Activated naive CD4-positive, alpha-beta T cell treated with anti-CD3 and anti-CD28 coated beads for 36 hours (primary cell): ENCODE measurements at regions of chr1 and their contacts with region 1.

Region 1: DNA sequence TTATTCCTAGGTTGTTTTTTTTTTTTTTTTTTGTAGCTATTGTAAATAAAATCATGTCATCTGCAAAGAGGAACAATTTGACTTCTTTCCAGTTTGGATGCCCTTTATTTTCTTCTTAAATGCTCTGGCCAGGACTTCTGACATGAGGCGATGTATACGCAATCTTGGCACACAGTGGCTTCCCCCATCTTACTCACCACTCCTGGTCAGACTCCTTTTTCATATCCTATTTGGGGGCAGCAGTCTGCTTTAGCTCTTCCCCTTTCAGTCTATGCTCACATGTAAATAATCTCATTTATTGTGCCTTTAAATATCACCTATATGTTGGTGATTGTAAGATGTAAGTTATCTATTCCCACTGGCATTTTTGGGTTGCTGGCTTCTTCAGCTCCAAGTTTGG is 56.1 kb downstream of the SLAMF6 start:
- DNase-seq: no peak
- H3K4me3 Mint-ChIP-seq: no peak overlapping the region
- H3K27ac Mint-ChIP-seq: peak overlapping the region; percentile 86
- H3K4me1 Mint-ChIP-seq: peaks cover 64% of the 10 kb centered on the region
- H3K27me3 Mint-ChIP-seq: no peaks in the 10 kb centered on the region

Region 2: DNA sequence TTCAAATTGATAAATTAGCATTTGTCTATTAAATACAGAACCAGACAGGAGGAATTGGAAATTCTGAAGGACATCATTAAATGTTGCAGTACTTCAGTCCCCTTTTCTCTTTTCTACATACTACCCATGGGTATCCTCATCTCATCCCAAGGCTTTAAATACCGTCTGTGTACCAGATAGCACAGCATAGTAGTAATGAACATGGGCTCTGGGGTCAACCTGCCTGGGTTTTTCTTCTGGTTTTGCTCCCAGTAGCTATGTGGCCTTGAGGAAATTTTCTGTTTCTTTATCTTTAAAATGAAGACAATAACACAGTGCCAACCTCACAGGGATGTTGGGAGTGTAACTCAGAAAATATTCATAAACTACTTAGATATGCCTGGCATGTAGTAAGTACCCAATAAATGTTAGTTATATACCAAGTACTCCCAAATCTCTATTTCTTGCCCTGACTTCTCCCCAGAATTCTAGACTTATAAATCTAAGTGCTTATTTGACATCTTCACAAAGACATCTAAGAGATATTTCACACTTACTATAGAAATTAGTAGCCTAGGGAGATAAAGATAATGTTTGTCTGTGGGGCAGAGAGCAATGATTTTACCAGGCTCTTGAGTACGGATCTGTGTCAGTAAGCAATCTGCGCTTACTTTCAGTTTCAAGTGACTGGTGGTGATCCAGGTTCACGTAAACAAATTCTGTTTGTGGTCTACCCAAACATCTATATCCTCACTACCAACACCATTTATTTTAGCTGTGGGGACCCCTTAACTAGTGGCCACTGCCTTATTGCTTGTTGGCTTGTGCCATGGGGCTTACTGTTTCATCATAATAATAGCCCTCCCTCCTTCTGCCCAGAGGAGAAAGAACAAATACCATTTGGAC is 29.3 kb before region 1 on chr1:
- CTCF ChIA-PET with region 1: interaction called, 6 read pairs
- intact Hi-C with region 1: loop called (anchors 1 kb)
- DNase-seq: peak; percentile 51
- H3K4me3 Mint-ChIP-seq: peak overlapping the region; percentile 45
- H3K27ac Mint-ChIP-seq: peak overlapping the region; percentile 80
- H3K4me1 Mint-ChIP-seq: peaks cover 47% of the 10 kb centered on the region
- H3K27me3 Mint-ChIP-seq: no peaks in the 10 kb centered on the region

Region 3: DNA sequence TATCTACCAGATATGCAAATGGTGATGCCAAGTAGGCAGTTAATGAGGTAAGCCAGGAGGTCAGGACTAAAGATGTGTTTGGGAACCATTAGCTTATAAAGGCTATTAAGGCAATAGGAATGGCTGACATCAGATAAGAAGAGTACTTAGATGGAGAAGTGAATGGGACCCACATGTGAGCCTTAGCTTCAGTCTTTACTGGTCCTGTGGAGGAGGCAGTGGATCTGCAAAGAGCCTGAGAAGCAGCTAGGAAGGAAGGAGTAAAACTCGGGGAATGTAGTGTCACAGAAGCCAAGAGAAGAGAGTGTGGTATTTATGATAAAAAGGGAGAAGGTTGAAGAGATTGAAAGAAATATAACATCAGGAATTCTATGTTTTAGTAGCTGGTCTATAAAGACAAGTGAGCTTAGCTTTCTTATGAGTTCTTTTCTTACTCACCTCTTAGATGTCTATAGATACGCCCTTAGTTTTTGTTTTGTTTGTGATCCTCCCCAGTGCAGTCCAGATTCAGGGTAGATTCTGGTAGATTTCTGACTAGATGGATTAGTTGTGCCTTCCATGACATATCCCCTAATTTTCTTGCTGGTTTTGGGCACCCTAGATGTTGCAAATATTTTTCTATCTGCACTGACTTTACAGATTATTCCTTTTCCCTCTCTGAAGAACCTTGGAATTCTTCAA is 16.7 kb after region 1 on chr1:
- CTCF ChIA-PET with region 1: interaction called, 11 read pairs
- intact Hi-C with region 1: no loop called
- DNase-seq: no peak
- H3K4me3 Mint-ChIP-seq: no peak overlapping the region
- H3K27ac Mint-ChIP-seq: peak overlapping the region; percentile 65
- H3K4me1 Mint-ChIP-seq: peaks cover 40% of the 10 kb centered on the region
- H3K27me3 Mint-ChIP-seq: no peaks in the 10 kb centered on the region